BJ (cell line): ENCODE measurements at regions of chr11 and their contacts with region 1.

Region 1: GRCh38 chr11:122126024-122126688 is 10.1 kb upstream of the BLID start:
- DNase-seq: no peak
- H3K4me3 ChIP-seq: no peak overlapping the region
- H3K27me3 ChIP-seq: no peaks in the 10 kb centered on the region
- CTCF ChIP-seq: no peak

Region 2: DNA sequence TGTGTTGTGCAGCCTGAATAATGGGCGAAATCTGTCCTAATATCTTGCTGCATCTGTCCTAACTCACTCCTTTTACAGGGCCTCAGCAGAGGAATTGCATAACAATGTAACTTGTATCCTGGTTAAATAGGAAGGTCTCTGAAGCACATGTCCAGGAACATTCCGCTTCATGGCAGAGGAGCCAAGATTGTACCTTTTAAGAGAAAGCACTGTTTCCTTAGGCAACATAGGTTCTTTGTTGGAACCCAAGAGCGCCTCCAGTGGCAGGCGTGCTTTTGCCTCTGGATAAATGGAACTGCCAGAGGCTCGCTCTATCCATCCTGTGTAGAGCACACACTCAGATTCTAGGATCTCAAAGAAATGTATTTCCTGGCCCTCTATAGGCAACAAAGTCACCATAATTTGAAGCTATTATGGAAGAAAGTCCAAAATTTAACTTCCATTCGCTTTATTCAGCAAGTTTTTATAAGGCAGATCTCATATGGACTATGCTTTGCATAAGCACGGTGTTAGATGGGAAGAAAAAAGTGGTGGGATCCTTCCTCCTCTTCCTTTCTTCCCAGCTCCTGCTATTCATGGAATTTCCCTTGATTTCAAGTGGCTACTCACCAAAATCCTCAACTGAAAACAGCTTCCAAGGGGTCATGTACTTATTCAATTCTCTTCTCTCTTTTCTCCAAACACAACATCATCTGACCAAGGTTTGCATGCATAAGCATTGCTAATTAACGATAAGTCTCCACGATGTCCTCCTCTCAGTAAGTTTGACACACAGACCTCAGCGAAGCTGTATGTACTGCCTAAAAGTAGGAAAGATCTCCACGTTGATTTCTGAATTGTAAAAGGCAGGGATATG is 10.4 kb before region 1 on chr11 and contains the start of gene BLID:
- CTCF ChIA-PET with region 1: interaction called, 10 read pairs
- POLR2A ChIA-PET with region 1: no interaction called
- DNase-seq: no peak
- H3K4me3 ChIP-seq: no peak within 1 kb of the TSS
- H3K27me3 ChIP-seq: no peaks in the 10 kb centered on the region
- CTCF ChIP-seq: peak; percentile 64
- polyA plus RNA-seq, gene BLID: 0.16 and 0.37 TPM in 2 replicates